ENCODE measurements at regions of chr20 and their contacts with region 1.

Region 1: GRCh38 chr20:49915378-49916145 is at the start of gene SPATA2:
- DNase-seq: peak; percentile 93
- H3K4me3 Mint-ChIP-seq: peak within 1 kb of the TSS; percentile 90
- H3K27ac Mint-ChIP-seq: peak within 1 kb of the TSS; percentile 99
- H3K4me1 Mint-ChIP-seq: peaks cover 18% of the 10 kb centered on the region
- H3K27me3 Mint-ChIP-seq: no peaks in the 10 kb centered on the region
- CTCF ChIP-seq: no peak
- total RNA-seq, gene SPATA2: 5.5 and 8.6 TPM in 2 replicates

Region 2: DNA sequence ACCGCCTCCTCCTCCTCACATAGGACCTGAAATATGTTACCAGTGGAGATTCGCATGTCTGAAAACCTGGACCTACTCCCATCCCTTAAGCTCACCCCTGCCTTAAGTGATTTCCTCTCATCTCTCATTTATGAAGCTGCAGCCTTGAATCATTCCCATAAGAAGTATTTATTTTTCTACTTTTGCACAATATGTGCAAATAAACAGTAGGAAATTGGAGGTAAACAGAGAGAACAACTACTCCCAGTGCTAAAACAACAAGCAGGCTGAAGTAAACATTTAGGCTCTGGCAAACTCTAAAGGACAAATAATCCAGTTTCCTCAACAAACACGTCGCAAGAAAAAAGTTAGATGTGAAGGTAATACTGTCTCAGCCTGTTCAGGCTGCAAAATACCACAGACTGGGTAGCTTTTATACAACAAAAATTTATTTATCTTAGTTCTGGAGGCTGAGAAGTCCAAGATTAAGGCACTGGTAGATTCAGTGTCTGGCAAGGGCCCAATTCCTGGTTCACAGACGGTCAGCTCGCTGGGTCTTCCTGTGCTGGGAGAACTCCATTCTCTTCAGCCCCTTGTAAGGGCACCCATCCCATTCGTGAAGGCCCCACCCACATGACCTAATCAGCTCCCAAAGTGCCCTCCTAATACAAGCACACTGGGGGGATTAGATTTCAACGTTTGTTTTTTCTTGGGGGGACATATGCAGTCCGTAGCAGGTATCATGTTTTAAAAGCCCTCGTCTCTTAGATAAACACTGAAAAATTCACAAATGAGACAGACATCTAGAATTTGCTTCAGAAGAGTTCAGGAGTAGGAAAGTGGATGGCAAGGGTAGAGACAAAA is 15.8 kb before region 1 on chr20:
- CTCF ChIA-PET with region 1: interaction called, 12 read pairs
- POLR2A ChIA-PET with region 1: interaction called, 18 read pairs
- intact Hi-C with region 1: no loop called
- DNase-seq: no peak
- H3K4me3 Mint-ChIP-seq: no peak overlapping the region
- H3K27ac Mint-ChIP-seq: no peak overlapping the region
- H3K4me1 Mint-ChIP-seq: peaks cover 6% of the 10 kb centered on the region
- H3K27me3 Mint-ChIP-seq: no peaks in the 10 kb centered on the region
- CTCF ChIP-seq: no peak

Region 3: GRCh38 chr20:49928401-49929141 is 13.0 kb after region 1 on chr20:
- CTCF ChIA-PET with region 1: interaction called, 15 read pairs
- POLR2A ChIA-PET with region 1: interaction called, 146 read pairs
- intact Hi-C with region 1: no loop called
- DNase-seq: peak; percentile 84
- H3K4me3 Mint-ChIP-seq: no peak overlapping the region
- H3K27ac Mint-ChIP-seq: no peak overlapping the region
- H3K4me1 Mint-ChIP-seq: no peaks in the 10 kb centered on the region
- H3K27me3 Mint-ChIP-seq: no peaks in the 10 kb centered on the region
- CTCF ChIP-seq: peak; percentile 80

Region 4: DNA sequence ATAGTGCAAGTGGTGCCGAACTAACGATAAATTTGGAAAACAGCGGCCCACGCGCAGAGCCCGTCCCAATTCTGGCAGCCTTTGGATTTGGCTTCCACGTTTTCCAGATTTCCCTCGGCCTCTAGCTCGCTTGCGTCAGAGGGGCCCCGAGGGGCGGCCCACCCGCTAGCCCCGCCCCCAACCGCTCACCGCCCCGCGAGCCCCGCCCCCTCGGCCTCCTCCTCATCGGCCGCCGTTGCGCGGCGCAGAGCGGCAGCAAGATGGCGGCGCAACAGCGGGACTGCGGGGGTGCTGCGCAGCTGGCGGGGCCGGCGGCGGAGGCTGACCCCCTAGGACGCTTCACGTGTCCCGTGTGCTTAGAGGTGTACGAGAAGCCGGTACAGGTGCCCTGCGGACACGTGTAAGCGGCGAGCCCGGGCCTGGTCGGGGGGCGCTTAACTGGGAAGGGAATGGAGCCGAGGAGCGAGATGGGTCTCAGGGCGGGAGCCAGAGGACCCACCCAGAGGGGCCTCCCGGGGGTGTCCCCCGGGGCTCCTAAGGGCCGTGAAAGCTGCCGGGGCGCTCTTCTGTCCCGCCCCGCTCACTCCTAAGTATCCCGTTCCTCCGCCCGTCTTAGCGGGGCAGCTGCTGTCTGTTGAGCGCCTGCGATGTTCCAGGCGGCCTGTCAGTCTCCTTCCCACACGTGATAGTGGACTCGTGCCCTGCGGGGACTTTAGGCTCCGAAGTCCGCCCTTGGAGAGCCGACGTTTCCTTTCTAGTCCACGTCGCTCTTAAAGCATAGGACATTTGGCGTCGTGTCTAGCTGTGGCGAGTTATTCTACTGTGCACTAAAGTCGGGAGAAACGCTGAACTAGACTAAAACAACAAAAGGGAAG is 20.8 kb after region 1 on chr20 and contains the start of gene RNF114:
- CTCF ChIA-PET with region 1: interaction called, 15 read pairs
- POLR2A ChIA-PET with region 1: interaction called, 146 read pairs
- intact Hi-C with region 1: no loop called
- DNase-seq: peak; percentile 90
- H3K4me3 Mint-ChIP-seq: peak within 1 kb of the TSS; percentile 85
- H3K27ac Mint-ChIP-seq: peak within 1 kb of the TSS; percentile 69
- H3K4me1 Mint-ChIP-seq: peaks cover 23% of the 10 kb centered on the region
- H3K27me3 Mint-ChIP-seq: no peaks in the 10 kb centered on the region
- CTCF ChIP-seq: no peak
- total RNA-seq, gene RNF114: 40.0 and 48.6 TPM in 2 replicates

Measured in MCF 10A (cell line).